B cell (primary cell): ENCODE measurements at regions of chr2 and their contacts with region 1.

Region 1: GRCh38 chr2:20446917-20447436 is at the start of gene RHOB:
- DNase-seq: peak; percentile 98
- ATAC-seq: peak; percentile 92
- H3K4me3 ChIP-seq: peak within 1 kb of the TSS; percentile 65 to 79 (median 70)
- H3K4me3 Mint-ChIP-seq: peak within 1 kb of the TSS; percentile 95
- H3K27ac ChIP-seq: peak within 1 kb of the TSS; percentile 69 to 92
- H3K27ac Mint-ChIP-seq: peak within 1 kb of the TSS; percentile 96
- H3K4me1 ChIP-seq: peaks cover 15 to 20% of the 10 kb centered on the region in 2 donors
- H3K4me1 Mint-ChIP-seq: peaks cover 18% of the 10 kb centered on the region
- H3K27me3 ChIP-seq: peaks cover 0 to 21% (median 7%) of the 10 kb centered on the region in 4 experiments
- H3K27me3 Mint-ChIP-seq: peaks cover 14% of the 10 kb centered on the region
- CTCF ChIP-seq: no peak
- total RNA-seq, gene RHOB: 63.0 and 65.0 TPM in 2 replicates

Region 2: GRCh38 chr2:19901442-19902215 is 545.3 kb before region 1 on chr2 and contains the start of gene TTC32:
- CTCF ChIA-PET with region 1: no interaction called
- POLR2A ChIA-PET with region 1: no interaction called
- intact Hi-C with region 1: loop called (anchors 5 kb)
- DNase-seq: peak; percentile 98
- ATAC-seq: peak; percentile 89
- H3K4me3 ChIP-seq: peak within 1 kb of the TSS; percentile 79 to 99 (median 93)
- H3K4me3 Mint-ChIP-seq: peak within 1 kb of the TSS; percentile 99
- H3K27ac ChIP-seq: peak within 1 kb of the TSS; percentile 92 to 94
- H3K27ac Mint-ChIP-seq: peak within 1 kb of the TSS; percentile 99
- H3K4me1 ChIP-seq: peaks cover 19 to 33% of the 10 kb centered on the region in 2 donors
- H3K4me1 Mint-ChIP-seq: peaks cover 44% of the 10 kb centered on the region
- H3K27me3 ChIP-seq: no peaks in the 10 kb centered on the region
- H3K27me3 Mint-ChIP-seq: peaks cover 3% of the 10 kb centered on the region
- CTCF ChIP-seq: no peak
- total RNA-seq, gene TTC32: 38.1 TPM in 2 replicates

Region 3: GRCh38 chr2:20350753-20351554 is 96.0 kb before region 1 on chr2 and contains the start of gene PUM2:
- CTCF ChIA-PET with region 1: interaction called, 3 read pairs
- POLR2A ChIA-PET with region 1: interaction called, 16 read pairs
- intact Hi-C with region 1: loop called (anchors 1 kb)
- DNase-seq: peak; percentile 99
- ATAC-seq: peak; percentile 85
- H3K4me3 ChIP-seq: peak within 1 kb of the TSS; percentile 76 to 95 (median 86)
- H3K4me3 Mint-ChIP-seq: no peak within 1 kb of the TSS
- H3K27ac ChIP-seq: peak within 1 kb of the TSS; percentile 89 to 94
- H3K27ac Mint-ChIP-seq: no peak within 1 kb of the TSS
- H3K4me1 ChIP-seq: peaks cover 32 to 39% of the 10 kb centered on the region in 2 donors
- H3K4me1 Mint-ChIP-seq: peaks cover 34% of the 10 kb centered on the region
- H3K27me3 ChIP-seq: no peaks in the 10 kb centered on the region
- H3K27me3 Mint-ChIP-seq: no peaks in the 10 kb centered on the region
- CTCF ChIP-seq: peak; percentile 17
- total RNA-seq, gene PUM2: 151 and 163 TPM in 2 replicates

Region 4: DNA sequence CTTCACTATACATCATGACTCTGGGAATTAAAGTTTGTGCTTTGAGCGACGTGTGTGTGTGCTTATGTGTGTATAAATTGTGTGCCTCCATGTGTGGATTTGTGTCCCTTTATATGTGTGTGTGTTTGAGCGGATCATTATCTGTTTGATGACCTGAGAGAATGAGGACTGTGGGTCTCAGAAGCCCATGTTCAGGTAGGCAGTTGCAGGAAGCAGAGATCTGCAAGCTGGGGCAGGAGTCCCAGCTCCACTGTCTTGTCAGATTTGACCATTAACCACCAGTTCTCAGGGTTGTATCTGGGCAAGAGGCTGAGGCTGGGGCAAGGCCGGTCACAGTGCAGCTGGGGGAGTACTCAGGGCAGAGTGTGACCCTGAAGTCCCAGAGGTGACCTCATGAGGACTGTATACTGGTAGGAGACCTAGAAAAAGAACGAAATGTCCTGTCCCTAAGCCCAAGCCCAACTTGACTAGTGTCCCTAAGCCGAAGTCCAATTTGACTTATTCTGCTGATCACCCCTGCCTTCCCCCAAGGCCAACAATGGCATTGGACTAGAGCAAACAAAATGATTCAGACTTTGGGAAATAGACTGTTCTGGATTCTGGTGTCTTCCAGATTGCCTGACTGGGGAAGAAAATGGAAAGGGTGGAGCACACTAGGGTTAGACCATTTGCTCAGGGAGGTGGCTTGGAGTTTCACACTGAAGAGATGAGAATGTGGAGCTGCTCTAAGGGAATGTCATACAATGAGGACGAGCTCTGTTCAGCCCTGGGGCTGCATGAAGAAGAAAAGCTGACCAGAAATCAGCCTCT is 28.0 kb after region 1 on chr2:
- CTCF ChIA-PET with region 1: no interaction called
- POLR2A ChIA-PET with region 1: no interaction called
- intact Hi-C with region 1: no loop called
- DNase-seq: no peak
- ATAC-seq: no peak
- H3K4me3 ChIP-seq: no peak overlapping the region
- H3K4me3 Mint-ChIP-seq: no peak overlapping the region
- H3K27ac ChIP-seq: no peak overlapping the region
- H3K27ac Mint-ChIP-seq: no peak overlapping the region
- H3K4me1 ChIP-seq: no peaks in the 10 kb centered on the region
- H3K4me1 Mint-ChIP-seq: peaks cover 2% of the 10 kb centered on the region
- H3K27me3 ChIP-seq: no peaks in the 10 kb centered on the region
- H3K27me3 Mint-ChIP-seq: peaks cover 12% of the 10 kb centered on the region
- CTCF ChIP-seq: no peak

Region 5: GRCh38 chr2:20525041-20526035 is 78.4 kb after region 1 on chr2:
- CTCF ChIA-PET with region 1: interaction called, 5 read pairs
- POLR2A ChIA-PET with region 1: interaction called, 19 read pairs
- intact Hi-C with region 1: loop called (anchors 2 kb)
- DNase-seq: no peak
- ATAC-seq: peak; percentile 84
- H3K4me3 ChIP-seq: peak overlapping the region in 3 of 5 experiments; percentile 15 to 44 (median 34)
- H3K4me3 Mint-ChIP-seq: peak overlapping the region; percentile 84
- H3K27ac ChIP-seq: no peak overlapping the region
- H3K27ac Mint-ChIP-seq: peak overlapping the region; percentile 77
- H3K4me1 ChIP-seq: peaks cover 15 to 17% of the 10 kb centered on the region in 2 donors
- H3K4me1 Mint-ChIP-seq: peaks cover 28% of the 10 kb centered on the region
- H3K27me3 ChIP-seq: peaks cover 0 to 9% (median 0%) of the 10 kb centered on the region in 4 experiments
- H3K27me3 Mint-ChIP-seq: peaks cover 5% of the 10 kb centered on the region
- CTCF ChIP-seq: no peak

Region 6: GRCh38 chr2:20635675-20636584 is 189.0 kb after region 1 on chr2:
- CTCF ChIA-PET with region 1: interaction called, 114 read pairs
- POLR2A ChIA-PET with region 1: no interaction called
- intact Hi-C with region 1: loop called (anchors 1 kb)
- DNase-seq: peak; percentile 68
- ATAC-seq: peak; percentile 86
- H3K4me3 ChIP-seq: no peak overlapping the region
- H3K4me3 Mint-ChIP-seq: no peak overlapping the region
- H3K27ac ChIP-seq: no peak overlapping the region
- H3K27ac Mint-ChIP-seq: no peak overlapping the region
- H3K4me1 ChIP-seq: peaks cover 0 to 2% of the 10 kb centered on the region in 2 donors
- H3K4me1 Mint-ChIP-seq: peaks cover 11% of the 10 kb centered on the region
- H3K27me3 ChIP-seq: no peaks in the 10 kb centered on the region
- H3K27me3 Mint-ChIP-seq: no peaks in the 10 kb centered on the region
- CTCF ChIP-seq: peak; percentile 77

Region 7: DNA sequence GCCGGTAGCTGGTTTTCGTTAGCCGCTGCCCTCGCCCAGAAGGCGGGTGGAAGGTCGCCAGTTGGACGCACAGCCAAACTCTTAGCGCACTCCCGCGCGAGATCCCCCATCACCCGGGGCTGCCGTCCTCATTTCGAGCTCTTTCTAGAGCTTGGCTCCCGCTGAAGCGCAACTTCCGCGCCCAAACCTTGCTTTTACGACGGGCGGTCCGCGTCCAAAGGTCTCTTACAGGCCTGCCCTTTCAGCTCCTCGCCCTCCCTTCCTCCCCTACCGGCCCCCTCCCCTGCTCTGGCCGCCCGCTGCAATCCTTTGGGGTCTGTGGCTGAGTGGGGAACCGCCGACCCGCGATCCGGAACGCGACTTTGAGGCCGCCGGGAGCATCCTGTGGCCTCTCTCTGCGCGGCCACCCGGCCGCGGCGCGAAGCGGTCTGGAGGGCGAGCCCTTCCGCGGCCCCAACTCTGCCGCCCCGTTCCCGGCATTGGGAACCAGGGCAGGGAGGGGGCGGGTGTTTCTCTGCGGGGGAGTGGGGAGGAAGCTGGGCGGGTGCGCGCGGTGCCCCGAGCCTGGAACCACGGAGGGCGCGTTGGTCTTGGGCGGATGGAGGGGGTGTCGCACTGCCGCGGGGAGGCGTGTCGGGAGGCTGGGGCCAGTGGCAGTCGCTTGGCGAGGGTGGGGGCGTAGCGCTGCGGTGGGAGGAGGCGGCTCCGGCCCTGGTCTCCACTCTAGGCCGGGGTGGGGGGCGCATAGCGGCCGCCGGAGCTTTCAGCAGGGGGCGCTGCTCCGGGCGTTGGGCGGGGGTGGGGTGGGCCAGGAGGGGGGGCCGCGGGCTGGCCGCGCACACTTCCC is 219.6 kb after region 1 on chr2 and contains the start of gene GDF7:
- CTCF ChIA-PET with region 1: interaction called, 8 read pairs
- POLR2A ChIA-PET with region 1: interaction called, 17 read pairs
- intact Hi-C with region 1: no loop called
- DNase-seq: peak; percentile 87
- ATAC-seq: peak; percentile 82
- H3K4me3 ChIP-seq: peak within 1 kb of the TSS in 4 of 5 experiments; percentile 57 to 80 (median 64)
- H3K4me3 Mint-ChIP-seq: peak within 1 kb of the TSS; percentile 95
- H3K27ac ChIP-seq: peak within 1 kb of the TSS; percentile 47 to 61
- H3K27ac Mint-ChIP-seq: peak within 1 kb of the TSS; percentile 94
- H3K4me1 ChIP-seq: peaks cover 35 to 64% of the 10 kb centered on the region in 2 donors
- H3K4me1 Mint-ChIP-seq: peaks cover 35% of the 10 kb centered on the region
- H3K27me3 ChIP-seq: peaks cover 0 to 85% (median 25%) of the 10 kb centered on the region in 4 experiments
- H3K27me3 Mint-ChIP-seq: peaks cover 14% of the 10 kb centered on the region
- CTCF ChIP-seq: peak; percentile 48
- total RNA-seq, gene GDF7: 14.8 and 15.3 TPM in 2 replicates